Colonic mucosa (tissue), 4 donors: ENCODE measurements at regions of chr9 and their contacts with region 1.

Region 1: GRCh38 chr9:130770679-130771442 is 64.2 kb upstream of the ABL1 start:
- DNase-seq: no peak
- H3K4me3 ChIP-seq: no peak overlapping the region
- H3K27ac ChIP-seq: no peak overlapping the region
- H3K4me1 ChIP-seq: peaks cover 11% of the 10 kb centered on the region
- H3K27me3 ChIP-seq: no peaks in the 10 kb centered on the region
- CTCF ChIP-seq: peak; percentile 64

Region 2: GRCh38 chr9:130707225-130707976 is 63.5 kb before region 1 on chr9:
- intact Hi-C with region 1: loop called (anchors 5 kb)
- DNase-seq: peak; percentile 70
- H3K4me3 ChIP-seq: no peak overlapping the region
- H3K27ac ChIP-seq: no peak overlapping the region
- H3K4me1 ChIP-seq: peaks cover 4% of the 10 kb centered on the region
- H3K27me3 ChIP-seq: no peaks in the 10 kb centered on the region
- CTCF ChIP-seq: peak; percentile 82

Region 3: GRCh38 chr9:130834371-130835311 is 63.8 kb after region 1 on chr9 and contains the start of gene ABL1:
- intact Hi-C with region 1: no loop called
- DNase-seq: peak; percentile 80
- H3K4me3 ChIP-seq: peak within 1 kb of the TSS; percentile 63
- H3K27ac ChIP-seq: peak within 1 kb of the TSS; percentile 94
- H3K4me1 ChIP-seq: peaks cover 7% of the 10 kb centered on the region
- H3K27me3 ChIP-seq: no peaks in the 10 kb centered on the region
- CTCF ChIP-seq: no peak
- total RNA-seq, gene ABL1: 86.0 to 97.9 TPM

Region 4: GRCh38 chr9:130860458-130861316 is 89.8 kb after region 1 on chr9:
- intact Hi-C with region 1: loop called (anchors 5 kb)
- DNase-seq: peak; percentile 38
- H3K4me3 ChIP-seq: no peak overlapping the region
- H3K27ac ChIP-seq: peak overlapping the region; percentile 40
- H3K4me1 ChIP-seq: no peaks in the 10 kb centered on the region
- H3K27me3 ChIP-seq: no peaks in the 10 kb centered on the region
- CTCF ChIP-seq: no peak

Region 5: DNA sequence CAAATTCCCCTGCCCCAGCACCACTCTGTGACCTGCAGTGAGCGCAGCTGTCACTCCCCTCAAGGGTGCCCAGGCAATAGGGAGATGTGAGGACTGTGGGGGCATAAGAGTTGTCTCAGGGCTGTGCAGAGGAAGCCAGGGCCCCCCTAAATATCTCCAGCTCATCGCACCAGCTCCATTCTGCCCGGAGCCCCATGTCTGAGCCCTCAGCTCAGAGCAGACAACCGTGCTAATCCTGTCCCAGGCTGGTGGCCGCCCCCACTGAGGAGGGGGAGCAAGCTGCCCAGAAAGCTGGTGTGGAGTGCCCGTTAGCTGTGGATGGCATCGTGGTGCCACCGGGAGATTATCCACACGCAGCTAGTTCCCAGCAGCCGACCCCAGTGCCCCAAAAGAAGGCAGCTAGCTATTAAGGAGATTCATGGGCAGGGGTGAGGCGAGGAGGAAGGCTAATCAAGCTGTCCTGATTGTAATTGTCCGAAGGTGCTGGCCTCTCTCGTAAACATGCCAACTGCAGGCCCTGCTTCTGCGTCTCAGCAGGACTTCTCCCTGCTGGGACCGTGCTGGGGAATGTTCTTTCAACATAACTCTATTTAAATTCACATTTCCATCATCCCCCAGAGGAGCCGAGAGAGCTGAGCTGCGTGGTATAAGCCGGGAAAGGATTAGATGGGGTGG is 185.2 kb after region 1 on chr9:
- intact Hi-C with region 1: no loop called
- DNase-seq: no peak
- H3K4me3 ChIP-seq: no peak overlapping the region
- H3K27ac ChIP-seq: no peak overlapping the region
- H3K4me1 ChIP-seq: no peaks in the 10 kb centered on the region
- H3K27me3 ChIP-seq: no peaks in the 10 kb centered on the region
- CTCF ChIP-seq: no peak